MCF 10A (cell line): ENCODE measurements at regions of chr1 and their contacts with region 1.

Region 1: GRCh38 chr1:147515046-147515869 is 26.0 kb upstream of the BCL9 start:
- DNase-seq: peak; percentile 84
- H3K4me3 Mint-ChIP-seq: no peak overlapping the region
- H3K27ac Mint-ChIP-seq: no peak overlapping the region
- H3K4me1 Mint-ChIP-seq: peaks cover 7% of the 10 kb centered on the region
- H3K27me3 Mint-ChIP-seq: no peaks in the 10 kb centered on the region
- CTCF ChIP-seq: peak; percentile 27

Region 2: DNA sequence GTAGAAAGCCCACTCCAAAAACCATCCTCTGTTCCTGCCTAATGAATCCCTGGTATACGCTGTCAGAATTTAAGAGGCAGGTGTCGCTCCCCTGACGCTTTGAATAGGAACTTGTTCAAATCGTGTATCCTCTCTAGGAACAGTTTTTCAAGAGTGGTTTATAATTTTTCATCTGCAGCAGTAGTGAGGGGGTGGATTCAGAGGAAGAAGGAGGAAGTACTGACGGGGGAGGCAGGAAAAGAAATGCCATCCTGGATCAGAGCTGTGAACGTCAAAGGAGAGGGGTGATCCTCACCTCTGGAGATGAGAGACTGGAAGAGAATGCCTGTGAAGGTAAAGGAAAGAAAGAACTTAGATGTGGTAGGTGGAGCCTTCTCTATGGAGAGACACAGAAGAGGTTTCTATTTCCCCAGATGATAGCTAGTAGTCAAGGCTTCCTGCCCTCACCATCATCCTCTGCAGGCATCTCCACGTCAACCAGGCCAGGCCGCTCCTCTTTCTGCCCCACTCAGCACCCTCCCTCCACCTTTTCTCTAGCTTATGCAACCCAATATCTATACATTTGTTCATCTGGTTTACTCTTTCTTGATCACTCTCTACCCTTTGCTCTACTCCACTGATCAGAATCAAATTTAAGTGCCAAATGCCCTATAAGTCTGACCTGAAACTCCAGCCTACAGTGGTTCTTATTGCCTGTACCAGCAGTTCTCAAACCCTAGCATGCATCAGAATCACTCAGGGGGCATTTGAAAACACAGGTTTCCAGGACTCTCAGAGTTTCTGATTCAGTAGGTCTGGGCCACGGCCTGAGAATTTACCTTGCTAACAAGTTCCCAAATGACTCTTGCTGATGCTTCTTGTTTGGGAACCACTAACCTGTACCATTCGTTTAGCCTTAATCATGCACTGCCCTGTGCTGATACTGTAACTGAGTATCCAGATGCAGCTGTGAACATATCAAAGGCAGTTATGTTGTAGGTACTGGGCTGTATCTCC is 13.0 kb after region 1 on chr1:
- CTCF ChIA-PET with region 1: interaction called, 17 read pairs
- POLR2A ChIA-PET with region 1: interaction called, 3 read pairs
- intact Hi-C with region 1: no loop called
- DNase-seq: no peak
- H3K4me3 Mint-ChIP-seq: no peak overlapping the region
- H3K27ac Mint-ChIP-seq: no peak overlapping the region
- H3K4me1 Mint-ChIP-seq: no peaks in the 10 kb centered on the region
- H3K27me3 Mint-ChIP-seq: peaks cover 43% of the 10 kb centered on the region
- CTCF ChIP-seq: no peak

Region 3: GRCh38 chr1:147534386-147534785 is 19.1 kb after region 1 on chr1:
- CTCF ChIA-PET with region 1: interaction called, 17 read pairs
- POLR2A ChIA-PET with region 1: interaction called, 4 read pairs
- intact Hi-C with region 1: no loop called
- DNase-seq: peak; percentile 33
- H3K4me3 Mint-ChIP-seq: no peak overlapping the region
- H3K27ac Mint-ChIP-seq: no peak overlapping the region
- H3K4me1 Mint-ChIP-seq: peaks cover 8% of the 10 kb centered on the region
- H3K27me3 Mint-ChIP-seq: peaks cover 58% of the 10 kb centered on the region
- CTCF ChIP-seq: no peak